ENCODE measurements at regions of chr1 and their contacts with region 1.

Region 1: DNA sequence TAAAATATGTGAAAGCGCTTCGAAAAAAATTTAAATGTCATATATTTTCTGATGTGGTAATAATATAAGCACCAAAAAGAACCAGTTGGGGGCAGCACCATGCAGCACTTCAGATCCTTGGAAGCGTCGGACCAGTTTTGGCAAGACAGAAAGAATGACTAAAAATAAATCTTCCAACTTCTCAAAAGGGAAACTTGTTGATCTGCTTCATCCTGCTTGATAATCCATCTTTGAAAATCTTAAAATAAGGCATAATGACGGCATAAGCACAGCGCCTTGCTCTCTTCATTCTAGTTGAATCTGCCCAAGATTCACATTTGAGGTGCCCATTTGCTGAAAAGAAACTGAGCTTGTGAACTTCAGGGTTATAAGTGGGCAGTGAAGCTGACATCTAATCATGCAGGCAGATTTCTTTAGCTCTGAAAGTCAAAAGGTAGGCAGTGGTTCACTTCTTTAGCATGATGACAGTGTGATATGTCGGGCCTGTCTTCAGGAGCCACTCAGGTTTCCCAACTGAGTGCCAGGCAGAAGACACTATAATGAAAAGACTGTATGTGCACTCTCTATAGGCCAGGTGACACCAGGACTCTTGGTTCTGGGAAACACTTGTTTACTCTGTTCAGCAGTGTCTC is 19.8 kb upstream of the MUTYH start:
- DNase-seq: peak; percentile 80
- ATAC-seq: peak; percentile 68
- H3K4me3 Mint-ChIP-seq: no peak overlapping the region
- H3K27ac Mint-ChIP-seq: no peak overlapping the region
- H3K4me1 Mint-ChIP-seq: peaks cover 7% of the 10 kb centered on the region
- H3K27me3 Mint-ChIP-seq: no peaks in the 10 kb centered on the region
- CTCF ChIP-seq: peak; percentile 75

Region 2: DNA sequence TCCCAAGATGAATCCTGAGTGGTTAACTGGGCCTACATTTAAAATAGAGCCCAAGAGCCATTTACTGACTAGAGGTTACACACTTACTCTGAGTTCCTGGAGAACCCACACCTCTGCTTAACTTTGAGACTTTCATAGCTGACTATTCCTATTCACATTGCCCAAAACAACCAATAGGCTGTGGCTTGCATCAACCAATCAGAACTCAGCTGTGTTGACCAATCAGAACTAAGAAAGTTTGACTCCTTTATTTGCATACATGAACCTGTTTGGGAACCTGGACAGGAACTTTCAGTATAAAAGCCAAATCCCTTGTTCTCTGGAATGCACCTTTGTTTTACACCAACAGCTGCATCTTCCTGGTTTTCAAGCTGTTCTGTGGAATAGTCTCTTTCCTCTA is 163.1 kb before region 1 on chr1:
- CTCF ChIA-PET with region 1: no interaction called
- POLR2A ChIA-PET with region 1: no interaction called
- intact Hi-C with region 1: no loop called
- DNase-seq: no peak
- ATAC-seq: peak; percentile 24
- H3K4me3 Mint-ChIP-seq: no peak overlapping the region
- H3K27ac Mint-ChIP-seq: no peak overlapping the region
- H3K4me1 Mint-ChIP-seq: no peaks in the 10 kb centered on the region
- H3K27me3 Mint-ChIP-seq: peaks cover 2% of the 10 kb centered on the region
- CTCF ChIP-seq: no peak

Region 3: DNA sequence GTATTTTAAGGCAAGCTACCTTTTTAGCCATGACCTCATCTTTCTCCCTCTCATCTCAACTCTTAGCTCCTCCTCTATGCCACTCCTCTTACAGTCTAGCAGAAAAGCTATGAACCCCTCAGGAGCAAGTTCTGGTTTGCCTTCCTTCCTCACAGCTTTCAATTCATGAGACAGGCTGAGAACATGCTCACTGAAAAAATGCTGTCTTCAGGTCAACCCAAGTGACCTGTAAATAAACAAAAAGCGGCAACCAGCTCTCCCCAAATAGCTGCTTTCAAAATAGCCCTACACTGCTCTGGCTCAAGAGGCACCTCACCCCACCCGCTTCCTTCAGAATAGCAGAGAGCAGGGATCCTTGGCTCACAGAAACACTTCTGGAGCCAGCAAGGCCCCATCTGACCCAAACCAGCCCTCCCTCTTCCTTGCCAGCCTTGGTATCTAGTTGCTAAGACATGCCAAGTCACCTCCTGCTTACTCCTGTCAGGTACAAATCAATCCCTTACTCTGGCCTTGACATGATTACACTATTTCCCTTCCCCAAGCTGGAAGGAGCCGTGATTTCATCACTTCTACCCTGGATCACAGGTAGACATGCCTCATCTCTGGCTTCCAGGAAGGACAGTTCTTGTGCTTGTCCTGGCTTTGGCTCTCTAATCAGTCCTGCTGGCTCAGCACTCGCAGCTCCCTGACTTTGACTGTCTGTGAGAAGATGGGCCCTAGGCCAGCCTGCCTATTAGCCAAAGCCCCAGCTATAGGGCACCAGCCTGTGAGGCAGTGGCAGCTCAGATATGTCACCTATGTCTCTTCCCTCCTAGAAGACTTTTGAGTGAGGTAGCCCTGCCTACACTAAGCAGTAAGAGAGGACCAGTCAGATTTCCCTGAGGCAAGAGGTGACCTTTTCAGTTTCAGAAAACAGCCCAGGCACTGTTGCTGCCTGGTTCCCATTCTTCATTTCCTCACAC is 11.0 kb before region 1 on chr1:
- CTCF ChIA-PET with region 1: interaction called, 54 read pairs
- POLR2A ChIA-PET with region 1: interaction called, 11 read pairs
- intact Hi-C with region 1: no loop called
- DNase-seq: no peak
- ATAC-seq: peak; percentile 78
- H3K4me3 Mint-ChIP-seq: no peak overlapping the region
- H3K27ac Mint-ChIP-seq: no peak overlapping the region
- H3K4me1 Mint-ChIP-seq: peaks cover 8% of the 10 kb centered on the region
- H3K27me3 Mint-ChIP-seq: no peaks in the 10 kb centered on the region
- CTCF ChIP-seq: no peak

Region 4: DNA sequence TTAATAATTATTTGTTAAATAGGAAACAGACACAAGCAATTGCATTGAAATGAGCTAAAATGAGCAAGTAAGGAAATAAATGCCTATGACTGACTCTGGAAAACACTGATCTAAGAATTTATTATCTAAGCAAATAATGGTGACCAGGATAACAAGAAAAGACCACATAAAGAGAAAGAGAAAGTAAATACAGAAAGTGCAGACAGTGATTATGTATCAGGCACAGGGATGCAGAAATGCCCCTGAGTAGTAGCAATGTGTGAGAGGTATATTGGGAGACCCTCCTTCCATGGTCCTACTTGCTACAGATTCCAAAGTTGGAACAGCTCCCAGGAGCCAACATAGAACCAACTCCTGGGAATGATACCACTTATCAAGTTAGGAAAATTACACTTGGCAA is 13.6 kb after region 1 on chr1:
- CTCF ChIA-PET with region 1: interaction called, 12 read pairs
- POLR2A ChIA-PET with region 1: interaction called, 3 read pairs
- intact Hi-C with region 1: no loop called
- DNase-seq: no peak
- ATAC-seq: no peak
- H3K4me3 Mint-ChIP-seq: no peak overlapping the region
- H3K27ac Mint-ChIP-seq: no peak overlapping the region
- H3K4me1 Mint-ChIP-seq: no peaks in the 10 kb centered on the region
- H3K27me3 Mint-ChIP-seq: no peaks in the 10 kb centered on the region
- CTCF ChIP-seq: no peak

Region 5: GRCh38 chr1:45499415-45499769 is 139.4 kb after region 1 on chr1:
- CTCF ChIA-PET with region 1: interaction called, 191 read pairs
- POLR2A ChIA-PET with region 1: no interaction called
- intact Hi-C with region 1: no loop called
- DNase-seq: peak; percentile 39
- ATAC-seq: no peak
- H3K4me3 Mint-ChIP-seq: peak overlapping the region; percentile 98
- H3K27ac Mint-ChIP-seq: peak overlapping the region; percentile 93
- H3K4me1 Mint-ChIP-seq: peaks cover 29% of the 10 kb centered on the region
- H3K27me3 Mint-ChIP-seq: no peaks in the 10 kb centered on the region
- CTCF ChIP-seq: peak; percentile 28

Region 6: DNA sequence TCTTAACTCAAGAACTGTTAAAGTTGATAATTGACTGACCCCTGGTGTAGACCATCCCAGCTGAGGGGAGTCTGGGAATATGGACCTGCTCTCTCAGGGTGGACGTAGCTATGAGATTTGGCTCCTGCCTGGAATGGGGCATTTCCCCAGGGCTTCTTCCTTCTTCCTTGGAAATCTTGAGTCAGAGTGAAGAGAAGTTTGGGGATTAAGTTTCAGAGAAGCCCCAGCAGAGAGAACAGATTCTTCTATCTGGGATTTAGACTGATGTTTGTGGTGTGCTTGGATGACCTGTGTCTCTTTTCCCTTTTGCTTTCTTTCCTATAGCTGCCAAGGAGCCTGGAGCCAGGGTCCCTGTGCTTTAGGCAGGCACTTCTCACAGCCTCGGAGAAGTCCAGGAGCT is 203.8 kb after region 1 on chr1:
- CTCF ChIA-PET with region 1: interaction called, 13 read pairs
- POLR2A ChIA-PET with region 1: no interaction called
- intact Hi-C with region 1: loop called (anchors 5 kb)
- DNase-seq: no peak
- ATAC-seq: no peak
- H3K4me3 Mint-ChIP-seq: no peak overlapping the region
- H3K27ac Mint-ChIP-seq: peak overlapping the region; percentile 8
- H3K4me1 Mint-ChIP-seq: peaks cover 16% of the 10 kb centered on the region
- H3K27me3 Mint-ChIP-seq: no peaks in the 10 kb centered on the region
- CTCF ChIP-seq: no peak

Region 7: GRCh38 chr1:45730475-45731339 is 370.7 kb after region 1 on chr1:
- CTCF ChIA-PET with region 1: no interaction called
- POLR2A ChIA-PET with region 1: no interaction called
- intact Hi-C with region 1: no loop called
- DNase-seq: no peak
- ATAC-seq: no peak
- H3K4me3 Mint-ChIP-seq: no peak overlapping the region
- H3K27ac Mint-ChIP-seq: no peak overlapping the region
- H3K4me1 Mint-ChIP-seq: peaks cover 4% of the 10 kb centered on the region
- H3K27me3 Mint-ChIP-seq: no peaks in the 10 kb centered on the region
- CTCF ChIP-seq: no peak

Measured in activated CD8-positive, alpha-beta T cell treated with anti-CD3 and anti-CD28 coated beads for 36 hours (primary cell).